Activated CD8-positive, alpha-beta T cell treated with anti-CD3 and anti-CD28 coated beads for 36 hours (primary cell): ENCODE measurements at regions of chr10 and their contacts with region 1.

Region 1: GRCh38 chr10:67849331-67850011 is 11.5 kb upstream of the DNAJC12 start:
- DNase-seq: peak; percentile 97
- ATAC-seq: peak; percentile 97
- H3K4me3 Mint-ChIP-seq: peak overlapping the region; percentile 88
- H3K27ac Mint-ChIP-seq: peak overlapping the region; percentile 94
- H3K4me1 Mint-ChIP-seq: peaks cover 12% of the 10 kb centered on the region
- H3K27me3 Mint-ChIP-seq: no peaks in the 10 kb centered on the region
- CTCF ChIP-seq: no peak

Region 2: GRCh38 chr10:67818320-67818719 is 31.2 kb before region 1 on chr10:
- CTCF ChIA-PET with region 1: interaction called, 3 read pairs
- POLR2A ChIA-PET with region 1: interaction called, 6 read pairs
- intact Hi-C with region 1: loop called (anchors 5 kb)
- DNase-seq: no peak
- ATAC-seq: peak; percentile 61
- H3K4me3 Mint-ChIP-seq: no peak overlapping the region
- H3K27ac Mint-ChIP-seq: peak overlapping the region; percentile 57
- H3K4me1 Mint-ChIP-seq: peaks cover 43% of the 10 kb centered on the region
- H3K27me3 Mint-ChIP-seq: peaks cover 3% of the 10 kb centered on the region
- CTCF ChIP-seq: no peak

Region 3: DNA sequence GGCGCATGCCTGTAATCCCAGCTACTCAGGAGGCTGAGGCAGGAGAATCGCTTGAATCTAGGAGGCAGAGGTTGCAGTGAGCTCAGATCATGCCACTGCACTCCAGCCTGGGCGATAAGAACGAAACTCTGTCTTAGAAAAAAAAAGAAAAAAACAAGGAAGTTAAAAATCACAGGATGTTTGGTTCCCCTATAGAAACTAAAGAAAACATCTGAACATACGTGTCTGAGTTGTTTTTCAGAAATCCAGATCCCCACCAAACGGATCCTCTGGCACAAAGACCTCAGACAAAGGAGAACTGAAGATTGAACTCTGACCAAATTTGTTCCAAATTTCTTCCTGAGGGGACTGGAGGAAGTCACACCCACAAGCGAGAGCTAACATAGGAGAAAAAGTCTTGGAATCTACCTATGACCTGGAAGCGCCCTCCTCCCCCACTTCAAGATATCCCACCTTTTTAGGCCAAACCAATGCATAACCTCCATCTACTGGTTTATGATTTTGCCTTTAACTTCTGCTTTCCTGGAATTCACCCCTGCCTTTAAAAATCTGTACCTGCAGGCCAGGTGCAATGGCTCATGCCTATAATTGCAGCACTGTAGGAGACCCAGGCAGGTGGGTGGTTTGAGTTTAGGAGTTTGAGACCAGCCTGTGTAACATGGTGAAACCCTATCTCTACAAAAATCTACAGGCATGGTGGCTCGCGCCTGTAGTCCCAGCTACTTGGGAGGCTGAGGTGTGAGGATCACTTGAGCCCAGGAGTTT is 15.3 kb after region 1 on chr10:
- CTCF ChIA-PET with region 1: interaction called, 35 read pairs
- POLR2A ChIA-PET with region 1: interaction called, 5 read pairs
- intact Hi-C with region 1: no loop called
- DNase-seq: no peak
- ATAC-seq: no peak
- H3K4me3 Mint-ChIP-seq: no peak overlapping the region
- H3K27ac Mint-ChIP-seq: no peak overlapping the region
- H3K4me1 Mint-ChIP-seq: no peaks in the 10 kb centered on the region
- H3K27me3 Mint-ChIP-seq: no peaks in the 10 kb centered on the region
- CTCF ChIP-seq: no peak

Region 4: DNA sequence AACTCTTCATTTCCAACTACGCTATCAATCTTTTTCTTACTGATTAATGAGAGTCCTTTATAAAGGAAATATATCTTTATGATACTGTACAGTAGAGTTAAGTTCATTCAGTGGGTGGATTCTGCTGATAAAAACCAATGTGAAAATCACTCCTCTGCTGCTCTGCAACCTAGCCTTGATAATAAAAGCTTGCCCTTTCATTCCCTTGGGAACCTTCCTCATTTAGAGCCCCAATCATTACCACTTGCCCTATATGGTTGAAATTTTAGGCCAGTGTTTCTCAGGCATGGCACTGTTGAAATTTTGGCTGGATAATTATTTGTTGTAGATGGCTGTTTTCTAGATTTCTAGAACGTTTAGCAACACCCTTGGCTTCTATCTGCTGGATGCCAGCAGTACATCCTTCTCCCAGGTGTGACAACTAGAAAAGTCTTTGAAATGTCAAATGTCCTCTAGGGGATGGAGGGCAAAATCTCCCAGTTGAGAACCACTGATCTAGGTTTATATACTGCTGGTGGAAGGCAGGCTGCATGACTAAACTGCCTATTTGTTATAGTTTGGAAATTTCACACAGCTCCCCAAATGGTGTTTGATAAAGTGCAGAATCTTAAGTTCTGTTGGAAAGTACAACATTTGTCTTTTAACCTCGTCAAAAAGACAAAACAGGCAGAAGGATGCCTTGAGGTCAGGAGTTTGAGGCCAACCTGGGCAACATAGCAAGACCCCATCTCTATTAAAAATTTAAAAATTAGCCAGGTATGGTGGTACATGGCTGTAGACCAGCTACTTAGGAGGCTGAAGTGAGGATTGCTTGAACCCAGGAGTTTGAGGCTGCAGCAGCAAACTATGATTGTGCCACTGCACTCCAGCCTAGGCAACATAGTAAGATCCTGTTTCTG is 26.1 kb after region 1 on chr10:
- CTCF ChIA-PET with region 1: interaction called, 14 read pairs
- POLR2A ChIA-PET with region 1: interaction called, 3 read pairs
- intact Hi-C with region 1: no loop called
- DNase-seq: no peak
- ATAC-seq: no peak
- H3K4me3 Mint-ChIP-seq: no peak overlapping the region
- H3K27ac Mint-ChIP-seq: no peak overlapping the region
- H3K4me1 Mint-ChIP-seq: no peaks in the 10 kb centered on the region
- H3K27me3 Mint-ChIP-seq: no peaks in the 10 kb centered on the region
- CTCF ChIP-seq: no peak

Region 5: GRCh38 chr10:68032113-68032512 is 182.6 kb after region 1 on chr10:
- CTCF ChIA-PET with region 1: no interaction called
- POLR2A ChIA-PET with region 1: no interaction called
- intact Hi-C with region 1: no loop called
- DNase-seq: no peak
- ATAC-seq: no peak
- H3K4me3 Mint-ChIP-seq: no peak overlapping the region
- H3K27ac Mint-ChIP-seq: no peak overlapping the region
- H3K4me1 Mint-ChIP-seq: peaks cover 14% of the 10 kb centered on the region
- H3K27me3 Mint-ChIP-seq: no peaks in the 10 kb centered on the region
- CTCF ChIP-seq: no peak

Region 6: GRCh38 chr10:68156373-68157185 is 307.1 kb after region 1 on chr10:
- CTCF ChIA-PET with region 1: interaction called, 77 read pairs
- POLR2A ChIA-PET with region 1: no interaction called
- intact Hi-C with region 1: no loop called
- DNase-seq: peak; percentile 80
- ATAC-seq: no peak
- H3K4me3 Mint-ChIP-seq: no peak overlapping the region
- H3K27ac Mint-ChIP-seq: no peak overlapping the region
- H3K4me1 Mint-ChIP-seq: no peaks in the 10 kb centered on the region
- H3K27me3 Mint-ChIP-seq: no peaks in the 10 kb centered on the region
- CTCF ChIP-seq: peak; percentile 95

Region 7: GRCh38 chr10:68301790-68302502 is 452.5 kb after region 1 on chr10:
- CTCF ChIA-PET with region 1: no interaction called
- POLR2A ChIA-PET with region 1: no interaction called
- intact Hi-C with region 1: loop called (anchors 10 kb)
- DNase-seq: no peak
- ATAC-seq: peak; percentile 53
- H3K4me3 Mint-ChIP-seq: no peak overlapping the region
- H3K27ac Mint-ChIP-seq: no peak overlapping the region
- H3K4me1 Mint-ChIP-seq: no peaks in the 10 kb centered on the region
- H3K27me3 Mint-ChIP-seq: no peaks in the 10 kb centered on the region
- CTCF ChIP-seq: peak; percentile 70